ENCODE measurements at regions of chr14 and their contacts with region 1.

Region 1: GRCh38 chr14:60091550-60092530 is at the start of gene PCNX4:
- DNase-seq: peak; percentile 92
- H3K4me3 Mint-ChIP-seq: peak within 1 kb of the TSS; percentile 98
- H3K27ac Mint-ChIP-seq: peak within 1 kb of the TSS; percentile 99
- H3K4me1 Mint-ChIP-seq: peaks cover 31% of the 10 kb centered on the region
- H3K27me3 Mint-ChIP-seq: no peaks in the 10 kb centered on the region
- total RNA-seq, gene PCNX4: 38.8 and 46.3 TPM in 2 replicates

Region 2: GRCh38 chr14:59483900-59484638 is 607.8 kb before region 1 on chr14 and contains the starts of genes JKAMP and L3HYPDH:
- intact Hi-C with region 1: loop called (anchors 10 kb)
- DNase-seq: peak; percentile 95
- H3K4me3 Mint-ChIP-seq: peak within 1 kb of the TSS; percentile 91
- H3K27ac Mint-ChIP-seq: peak within 1 kb of the TSS; percentile 84
- H3K4me1 Mint-ChIP-seq: peaks cover 47% of the 10 kb centered on the region
- H3K27me3 Mint-ChIP-seq: no peaks in the 10 kb centered on the region
- total RNA-seq, gene JKAMP: 26.0 and 29.6 TPM in 2 replicates
- total RNA-seq, gene L3HYPDH: 14.2 and 15.9 TPM in 2 replicates

Region 3: GRCh38 chr14:59964251-59965007 is 127.4 kb before region 1 on chr14:
- intact Hi-C with region 1: loop called (anchors 10 kb)
- DNase-seq: no peak
- H3K4me3 Mint-ChIP-seq: no peak overlapping the region
- H3K27ac Mint-ChIP-seq: no peak overlapping the region
- H3K4me1 Mint-ChIP-seq: peaks cover 13% of the 10 kb centered on the region
- H3K27me3 Mint-ChIP-seq: peaks cover 9% of the 10 kb centered on the region

Region 4: GRCh38 chr14:60151715-60152114 is 59.9 kb after region 1 on chr14:
- intact Hi-C with region 1: loop called (anchors 1 kb)
- DNase-seq: peak; percentile 67
- H3K4me3 Mint-ChIP-seq: no peak overlapping the region
- H3K27ac Mint-ChIP-seq: peak overlapping the region; percentile 89
- H3K4me1 Mint-ChIP-seq: peaks cover 33% of the 10 kb centered on the region
- H3K27me3 Mint-ChIP-seq: no peaks in the 10 kb centered on the region

Region 5: GRCh38 chr14:60164712-60165546 is 73.1 kb after region 1 on chr14 and contains the start of gene DHRS7:
- intact Hi-C with region 1: loop called (anchors 1 kb)
- DNase-seq: peak; percentile 58
- H3K4me3 Mint-ChIP-seq: peak within 1 kb of the TSS; percentile 94
- H3K27ac Mint-ChIP-seq: peak within 1 kb of the TSS; percentile 95
- H3K4me1 Mint-ChIP-seq: peaks cover 25% of the 10 kb centered on the region
- H3K27me3 Mint-ChIP-seq: no peaks in the 10 kb centered on the region
- total RNA-seq, gene DHRS7: 52.9 and 55.8 TPM in 2 replicates

Region 6: GRCh38 chr14:60184146-60184904 is 92.5 kb after region 1 on chr14:
- intact Hi-C with region 1: loop called (anchors 2 kb)
- DNase-seq: no peak
- H3K4me3 Mint-ChIP-seq: peak overlapping the region; percentile 63
- H3K27ac Mint-ChIP-seq: peak overlapping the region; percentile 66
- H3K4me1 Mint-ChIP-seq: peaks cover 14% of the 10 kb centered on the region
- H3K27me3 Mint-ChIP-seq: peaks cover 2% of the 10 kb centered on the region

Region 7: GRCh38 chr14:60331201-60332045 is 239.6 kb after region 1 on chr14:
- intact Hi-C with region 1: loop called (anchors 5 kb)
- DNase-seq: peak; percentile 61
- H3K4me3 Mint-ChIP-seq: peak overlapping the region; percentile 86
- H3K27ac Mint-ChIP-seq: peak overlapping the region; percentile 90
- H3K4me1 Mint-ChIP-seq: peaks cover 34% of the 10 kb centered on the region
- H3K27me3 Mint-ChIP-seq: peaks cover 46% of the 10 kb centered on the region

Measured in activated T-helper 2 cell treated with anti-CD3 and anti-CD28 coated beads, Interferon-gamma antibody, Interleukin-2, Interleukin-4, amounts not matched to agents 10 μg/mL and 5 μg/mL and 100 μg/mL, durations not matched to agents 14 hours and 24 hours and 36 hours (primary cell).